Heart left ventricle (tissue), 16 donors: ENCODE measurements at regions of chr10 and their contacts with region 1.

Region 1: GRCh38 chr10:23067939-23068775 is 27.2 kb upstream of the MSRB2 start:
- DNase-seq: peak; percentile 59 to 83 (median 66)
- ATAC-seq: peak; percentile 25 to 73 (median 68)
- H3K4me3 ChIP-seq: no peak overlapping the region
- H3K27ac ChIP-seq: no peak overlapping the region
- H3K4me1 ChIP-seq: peaks cover 0 to 23% (median 10%) of the 10 kb centered on the region in 12 donors
- H3K27me3 ChIP-seq: no peaks in the 10 kb centered on the region
- CTCF ChIP-seq: peak; percentile 70 to 90 (median 82)
- POLR2A ChIP-seq: no peak

Region 2: DNA sequence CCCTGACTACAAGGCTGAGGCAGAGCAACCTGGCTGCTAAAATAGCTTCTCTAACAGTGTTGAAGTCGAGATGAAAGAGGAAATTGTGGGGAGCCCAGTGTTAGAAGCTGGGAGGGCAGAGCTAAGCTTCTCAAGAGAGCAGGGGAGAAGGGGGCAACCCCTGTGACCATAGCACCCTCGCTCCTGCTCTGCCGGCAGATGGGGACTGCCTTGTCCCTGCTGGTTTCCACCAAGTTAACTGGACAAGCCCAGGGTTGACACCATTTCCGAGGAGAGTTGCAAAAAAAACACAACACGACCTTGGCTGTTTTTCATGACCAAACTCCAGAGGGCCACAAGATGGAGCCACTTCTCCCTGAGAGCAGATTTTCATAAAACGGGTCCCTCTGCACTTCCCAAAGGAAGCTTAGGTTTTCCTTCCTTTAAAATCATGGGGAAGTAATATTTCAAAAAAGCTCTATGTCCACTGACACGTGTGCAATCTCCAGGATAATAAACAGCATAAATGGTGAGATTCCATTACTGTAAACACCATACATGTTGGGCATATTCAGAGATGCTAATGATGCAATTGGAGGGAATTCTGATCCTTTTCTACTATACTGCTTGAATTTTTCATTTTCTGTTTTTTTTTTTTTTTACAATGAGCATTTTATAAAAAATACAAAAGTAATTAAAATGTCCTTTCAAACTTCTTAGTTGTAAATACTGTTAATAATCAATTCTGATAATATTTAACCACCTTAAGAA is 494.2 kb before region 1 on chr10:
- intact Hi-C with region 1: loop called in 1 of 10 experiments (anchors 5 kb)
- DNase-seq: peak in 1 of 5 donors; percentile 24
- ATAC-seq: peak in 2 of 4 donors; percentile 49 to 53
- H3K4me3 ChIP-seq: no peak overlapping the region
- H3K27ac ChIP-seq: no peak overlapping the region
- H3K4me1 ChIP-seq: peaks cover 0 to 15% (median 6%) of the 10 kb centered on the region in 12 donors
- H3K27me3 ChIP-seq: no peaks in the 10 kb centered on the region
- CTCF ChIP-seq: peak in 10 of 12 donors; percentile 22 to 71 (median 37)
- POLR2A ChIP-seq: no peak